Activated B cell treated with CpG ODN at 0.5 μM for 24 hours (primary cell): ENCODE measurements at regions of chr9 and their contacts with region 1.

Region 1: DNA sequence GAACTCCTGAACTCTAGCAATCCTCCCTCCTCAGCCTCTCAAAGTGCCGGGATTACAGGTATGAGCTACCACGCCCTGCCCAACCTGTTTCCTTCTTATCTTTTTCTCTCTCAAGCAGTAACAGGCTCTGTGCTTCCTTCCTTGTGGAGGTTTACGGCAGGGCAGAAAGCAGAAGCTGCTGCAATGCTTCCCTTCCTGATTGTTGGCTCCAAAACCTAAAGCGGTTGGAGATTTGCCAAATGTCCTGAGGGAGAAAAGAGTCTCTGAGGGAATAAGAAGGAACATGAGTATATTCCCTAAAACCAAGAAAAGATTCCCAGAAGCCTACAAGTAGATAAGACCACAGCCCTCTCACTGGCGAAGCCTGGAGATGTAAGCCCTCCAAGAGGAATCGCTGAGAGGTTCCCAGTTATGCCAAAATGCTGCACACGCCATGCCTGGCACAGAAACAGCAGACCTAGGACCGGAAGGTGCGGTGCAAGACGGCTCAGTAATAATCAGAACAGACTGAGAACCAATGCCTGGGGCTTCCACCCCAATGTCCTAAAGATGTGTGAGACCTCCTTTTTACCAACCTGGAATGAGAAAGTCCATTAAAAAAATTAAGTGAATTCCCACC is 73.2 kb downstream of the APTX start:
- DNase-seq: no peak
- ATAC-seq: no peak
- H3K4me3 Mint-ChIP-seq: no peak overlapping the region
- H3K27ac Mint-ChIP-seq: no peak overlapping the region
- H3K4me1 Mint-ChIP-seq: no peaks in the 10 kb centered on the region
- H3K27me3 Mint-ChIP-seq: peaks cover 5% of the 10 kb centered on the region
- CTCF ChIP-seq: no peak

Region 2: GRCh38 chr9:32877639-32878217 is 50.5 kb before region 1 on chr9:
- CTCF ChIA-PET with region 1: no interaction called
- POLR2A ChIA-PET with region 1: interaction called, 16 read pairs
- intact Hi-C with region 1: no loop called
- DNase-seq: no peak
- ATAC-seq: no peak
- H3K4me3 Mint-ChIP-seq: no peak overlapping the region
- H3K27ac Mint-ChIP-seq: no peak overlapping the region
- H3K4me1 Mint-ChIP-seq: peaks cover 5% of the 10 kb centered on the region
- H3K27me3 Mint-ChIP-seq: peaks cover 2% of the 10 kb centered on the region
- CTCF ChIP-seq: no peak